PC-3 (cell line): ENCODE measurements at regions of chr10 and their contacts with region 1.

Region 1: DNA sequence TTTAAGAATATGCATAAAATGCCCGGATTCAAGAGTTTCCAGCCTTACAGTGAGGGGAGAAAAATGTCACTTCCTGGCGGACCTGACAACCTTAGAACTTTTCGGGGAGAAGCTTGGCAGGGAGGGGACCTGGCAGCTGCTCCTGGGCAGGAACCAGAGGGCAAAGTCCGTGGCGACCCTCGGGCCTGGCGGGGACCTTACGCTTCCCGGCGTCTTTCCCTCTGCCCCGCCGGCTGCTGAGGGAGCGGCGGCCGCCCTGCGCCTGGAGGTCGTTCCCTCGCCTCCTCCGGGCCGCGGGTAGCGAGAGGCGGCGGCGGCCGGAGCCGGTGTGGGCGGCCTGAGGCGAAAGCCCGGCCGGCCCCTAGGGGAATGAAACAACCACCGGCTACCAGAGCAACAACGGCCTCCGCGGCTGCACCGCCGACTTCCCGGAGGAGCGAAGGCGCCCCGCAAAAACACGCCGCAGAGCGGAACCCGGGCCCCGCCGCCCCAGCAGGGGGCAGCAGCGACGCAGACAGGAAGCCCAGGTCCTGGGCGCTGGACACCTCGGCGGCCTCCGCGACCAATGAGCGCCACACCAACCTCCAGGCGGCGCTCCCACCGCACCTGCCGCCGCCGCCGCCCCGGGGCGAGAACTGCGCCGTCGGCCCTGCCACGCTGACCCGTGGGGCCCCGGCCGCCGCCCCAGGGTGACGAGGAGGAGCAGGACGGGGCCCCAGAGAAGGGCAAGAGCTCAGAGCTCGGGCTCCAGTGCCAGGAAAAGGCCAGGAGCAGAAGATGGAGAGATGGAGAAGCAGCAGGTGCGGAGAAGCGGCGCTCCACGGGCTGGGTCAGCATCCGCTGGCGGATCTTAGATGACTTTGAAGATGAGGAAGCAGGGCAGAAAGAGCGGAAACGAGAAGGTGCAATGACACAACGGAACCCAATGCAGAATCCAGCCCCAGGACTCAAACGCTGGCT is 10.5 kb upstream of the ACSM6 start:
- DNase-seq: peak; percentile 85
- ATAC-seq: peak; percentile 97
- H3K4me3 ChIP-seq: peak overlapping the region; percentile 71
- H3K27ac ChIP-seq: no peak overlapping the region
- H3K4me1 ChIP-seq: no peaks in the 10 kb centered on the region; the same call in 1 of the 2 replicates
- H3K27me3 ChIP-seq: no peaks in the 10 kb centered on the region
- CTCF ChIP-seq: peak; percentile 87

Region 2: GRCh38 chr10:95133016-95133752 is 50.4 kb before region 1 on chr10:
- CTCF ChIA-PET with region 1: no interaction called
- POLR2A ChIA-PET with region 1: no interaction called
- intact Hi-C with region 1: loop called (anchors 1 kb)
- DNase-seq: peak; percentile 82
- ATAC-seq: peak; percentile 62
- H3K4me3 ChIP-seq: no peak overlapping the region
- H3K27ac ChIP-seq: no peak overlapping the region
- H3K4me1 ChIP-seq: no peaks in the 10 kb centered on the region
- H3K27me3 ChIP-seq: no peaks in the 10 kb centered on the region
- CTCF ChIP-seq: peak; percentile 82